HCT116 (cell line): ENCODE measurements at regions of chr7 and their contacts with region 1.

Region 1: GRCh38 chr7:101321491-101322401 is at the start of gene IFT22:
- DNase-seq: peak; percentile 66
- ATAC-seq: peak; percentile 96
- H3K4me3 ChIP-seq: peak within 1 kb of the TSS; percentile 82 to 90
- H3K27ac ChIP-seq: peak within 1 kb of the TSS; percentile 84
- H3K4me1 ChIP-seq: peaks cover 4 to 11% of the 10 kb centered on the region in 2 experiments
- H3K27me3 ChIP-seq: no peaks in the 10 kb centered on the region
- CTCF ChIP-seq: peak; percentile 47 to 74 (median 52)
- POLR2A ChIP-seq: peak; percentile 41
- RAD21 ChIP-seq: peak; percentile 69
- total RNA-seq, gene IFT22: 27.2 TPM

Region 2: DNA sequence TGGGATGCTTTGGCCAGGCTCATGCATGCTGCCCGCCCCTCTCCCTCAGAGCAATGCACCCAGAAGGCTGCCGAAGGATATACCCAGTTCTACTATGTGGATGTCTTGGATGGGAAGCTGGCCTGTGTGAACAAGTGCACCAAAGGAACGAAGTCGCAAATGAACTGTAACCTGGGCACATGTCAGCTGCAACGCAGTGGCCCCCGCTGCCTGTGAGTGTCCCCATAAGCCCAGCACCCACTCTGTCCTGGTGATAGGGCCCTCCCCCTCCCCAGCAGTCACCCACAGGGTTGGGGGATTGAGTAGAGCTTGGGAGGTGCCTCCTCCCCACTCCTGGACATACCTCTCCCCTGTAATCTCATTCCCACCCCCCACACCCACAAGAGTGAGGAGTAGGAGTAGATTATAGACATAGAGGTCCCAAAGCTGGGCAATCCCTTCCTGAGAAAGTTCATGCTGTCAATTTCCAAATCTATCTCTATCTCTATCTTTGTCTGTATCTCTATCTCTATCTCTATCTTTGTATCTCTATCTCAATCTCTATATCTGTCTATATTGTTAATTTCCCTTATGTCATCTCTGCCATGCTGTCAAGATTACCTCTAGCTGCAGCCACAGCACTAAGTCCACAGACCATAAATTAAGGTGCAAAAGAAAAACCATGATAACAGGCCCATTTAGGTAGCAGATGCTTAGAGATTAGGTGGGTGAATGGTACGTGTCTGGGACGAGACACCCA is 308.6 kb before region 1 on chr7:
- CTCF ChIA-PET with region 1: no interaction called
- POLR2A ChIA-PET with region 1: no interaction called
- RAD21 ChIA-PET with region 1: no interaction called
- intact Hi-C with region 1: no loop called
- DNase-seq: no peak
- ATAC-seq: no peak
- H3K4me3 ChIP-seq: no peak overlapping the region
- H3K27ac ChIP-seq: no peak overlapping the region
- H3K4me1 ChIP-seq: peaks cover 0 to 6% of the 10 kb centered on the region in 2 experiments; a peak in 2 of 4 replicates
- H3K27me3 ChIP-seq: peaks cover 10% of the 10 kb centered on the region; the same call in 1 of the 2 replicates
- CTCF ChIP-seq: no peak
- POLR2A ChIP-seq: no peak
- RAD21 ChIP-seq: no peak

Region 3: GRCh38 chr7:101308245-101309085 is 13.3 kb before region 1 on chr7:
- CTCF ChIA-PET with region 1: no interaction called
- POLR2A ChIA-PET with region 1: interaction called, 13 read pairs
- RAD21 ChIA-PET with region 1: no interaction called
- intact Hi-C with region 1: no loop called
- DNase-seq: no peak
- ATAC-seq: peak; percentile 93
- H3K4me3 ChIP-seq: peak overlapping the region; percentile 86 to 96
- H3K27ac ChIP-seq: peak overlapping the region; percentile 69
- H3K4me1 ChIP-seq: peaks cover 5 to 16% of the 10 kb centered on the region in 2 experiments; a peak in 3 of 4 replicates
- H3K27me3 ChIP-seq: no peaks in the 10 kb centered on the region
- CTCF ChIP-seq: no peak
- POLR2A ChIP-seq: peak; percentile 92
- RAD21 ChIP-seq: no peak

Region 4: GRCh38 chr7:101436857-101437576 is 115.3 kb after region 1 on chr7:
- CTCF ChIA-PET with region 1: interaction called, 12 read pairs
- POLR2A ChIA-PET with region 1: no interaction called
- RAD21 ChIA-PET with region 1: no interaction called
- intact Hi-C with region 1: no loop called
- DNase-seq: peak; percentile 37
- ATAC-seq: peak; percentile 90
- H3K4me3 ChIP-seq: no peak overlapping the region
- H3K27ac ChIP-seq: no peak overlapping the region
- H3K4me1 ChIP-seq: peaks cover 7 to 14% of the 10 kb centered on the region in 2 experiments; a peak in 3 of 4 replicates
- H3K27me3 ChIP-seq: no peaks in the 10 kb centered on the region
- CTCF ChIP-seq: no peak
- POLR2A ChIP-seq: no peak
- RAD21 ChIP-seq: no peak